Activated CD4-positive, alpha-beta memory T cell treated with anti-CD3 and anti-CD28 coated beads for 36 hours (primary cell): ENCODE measurements at regions of chr4 and their contacts with region 1.

Region 1: GRCh38 chr4:107183155-107183774 is 147.2 kb upstream of the DKK2 start:
- DNase-seq: no peak
- H3K4me3 Mint-ChIP-seq: no peak overlapping the region
- H3K27ac Mint-ChIP-seq: no peak overlapping the region
- H3K4me1 Mint-ChIP-seq: no peaks in the 10 kb centered on the region
- H3K27me3 Mint-ChIP-seq: no peaks in the 10 kb centered on the region

Region 2: DNA sequence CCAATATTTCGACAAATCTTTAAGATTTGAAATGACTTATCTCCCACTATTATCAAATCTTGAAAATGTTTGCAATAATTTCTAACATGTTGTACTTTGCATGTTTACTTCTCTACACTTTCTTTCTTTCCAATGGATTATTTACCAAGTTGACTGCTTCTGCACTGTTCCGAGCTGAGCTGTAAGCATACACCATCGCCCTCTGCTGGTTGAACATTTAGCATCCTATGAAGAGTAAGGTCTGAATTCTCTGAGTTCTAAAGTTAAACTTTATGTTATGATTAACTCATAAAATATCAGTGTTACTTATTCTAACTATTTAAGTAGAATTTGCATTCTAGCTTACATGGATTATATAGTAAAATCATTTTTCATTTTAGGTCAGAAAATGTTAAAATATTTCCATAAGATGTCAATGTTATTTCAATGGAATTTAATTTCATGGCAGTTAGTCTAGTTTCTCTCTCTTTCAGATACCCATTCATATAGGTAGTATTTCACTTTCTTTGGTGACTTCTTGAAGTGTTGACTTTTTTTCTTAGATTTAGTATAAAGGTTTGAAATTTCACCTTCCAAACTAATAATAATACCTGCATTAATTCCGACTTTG is 284.5 kb before region 1 on chr4:
- CTCF ChIA-PET with region 1: no interaction called
- POLR2A ChIA-PET with region 1: no interaction called
- intact Hi-C with region 1: loop called (anchors 5 kb)
- DNase-seq: peak; percentile 12
- H3K4me3 Mint-ChIP-seq: no peak overlapping the region
- H3K27ac Mint-ChIP-seq: no peak overlapping the region
- H3K4me1 Mint-ChIP-seq: no peaks in the 10 kb centered on the region
- H3K27me3 Mint-ChIP-seq: no peaks in the 10 kb centered on the region

Region 3: GRCh38 chr4:107037199-107037584 is 146.1 kb before region 1 on chr4:
- CTCF ChIA-PET with region 1: no interaction called
- POLR2A ChIA-PET with region 1: no interaction called
- intact Hi-C with region 1: loop called (anchors 5 kb)
- DNase-seq: peak; percentile 19
- H3K4me3 Mint-ChIP-seq: no peak overlapping the region
- H3K27ac Mint-ChIP-seq: no peak overlapping the region
- H3K4me1 Mint-ChIP-seq: peaks cover 27% of the 10 kb centered on the region
- H3K27me3 Mint-ChIP-seq: peaks cover 58% of the 10 kb centered on the region

Region 4: DNA sequence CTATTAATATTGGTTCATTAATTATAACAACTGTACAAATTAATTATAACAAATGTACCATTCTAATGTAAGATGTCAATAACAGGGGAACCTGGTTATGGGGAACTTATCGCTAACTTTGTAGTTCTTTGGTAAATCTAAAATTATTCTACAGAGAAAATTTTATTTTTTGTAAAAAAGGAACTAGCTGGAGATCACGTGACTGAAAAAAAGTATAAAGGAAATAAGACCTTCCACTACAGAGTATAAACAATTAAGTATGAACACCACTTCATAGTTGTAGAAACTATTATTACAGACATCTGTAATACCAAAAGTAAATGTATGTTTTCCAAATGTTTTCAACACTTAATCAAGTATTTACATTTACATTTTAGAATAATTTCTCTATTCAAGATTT is 69.2 kb before region 1 on chr4:
- CTCF ChIA-PET with region 1: no interaction called
- POLR2A ChIA-PET with region 1: no interaction called
- intact Hi-C with region 1: loop called (anchors 2 kb)
- DNase-seq: no peak
- H3K4me3 Mint-ChIP-seq: no peak overlapping the region
- H3K27ac Mint-ChIP-seq: no peak overlapping the region
- H3K4me1 Mint-ChIP-seq: no peaks in the 10 kb centered on the region
- H3K27me3 Mint-ChIP-seq: no peaks in the 10 kb centered on the region